Right cardiac atrium (tissue), 5 donors: ENCODE measurements at regions of chr22 and their contacts with region 1.

Region 1: DNA sequence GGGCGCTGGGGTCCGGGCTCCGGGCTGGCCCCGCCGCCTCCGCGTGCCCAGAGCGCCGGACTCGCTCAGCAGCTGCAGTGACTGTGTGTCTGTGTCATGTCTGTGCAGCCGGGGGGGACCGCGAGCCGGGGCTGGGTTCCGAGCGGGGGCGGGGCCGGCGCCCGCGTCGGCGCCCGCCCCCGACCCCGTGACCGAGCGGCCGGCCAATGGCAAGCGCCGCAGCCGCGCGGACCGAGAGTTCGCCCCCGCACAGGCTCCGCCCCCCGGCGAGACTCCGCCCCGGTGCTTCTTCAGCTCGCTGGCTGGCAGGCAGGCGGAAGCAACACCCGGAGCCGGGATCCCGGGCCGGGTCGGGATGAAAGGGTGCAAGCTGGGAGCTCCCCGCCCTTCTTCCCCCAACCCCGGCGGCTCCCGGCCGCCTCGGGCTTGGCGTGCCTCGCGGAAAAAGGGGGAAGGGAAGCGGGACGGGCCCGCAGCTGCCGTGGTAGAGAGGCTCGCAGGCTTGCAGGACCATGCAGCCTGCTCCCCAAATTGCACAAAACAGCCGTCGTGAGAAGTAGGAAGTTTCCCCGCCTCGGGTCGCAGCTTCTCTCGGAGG is 750 bp upstream of the LARGE1 start:
- DNase-seq: peak; percentile 99 to 100 (median 100)
- ATAC-seq: peak; percentile 96 to 97
- H3K4me3 ChIP-seq: peak overlapping the region; percentile 63
- H3K27ac ChIP-seq: peak overlapping the region; percentile 56
- H3K4me1 ChIP-seq: no peaks in the 10 kb centered on the region
- H3K27me3 ChIP-seq: no peaks in the 10 kb centered on the region

Region 2: DNA sequence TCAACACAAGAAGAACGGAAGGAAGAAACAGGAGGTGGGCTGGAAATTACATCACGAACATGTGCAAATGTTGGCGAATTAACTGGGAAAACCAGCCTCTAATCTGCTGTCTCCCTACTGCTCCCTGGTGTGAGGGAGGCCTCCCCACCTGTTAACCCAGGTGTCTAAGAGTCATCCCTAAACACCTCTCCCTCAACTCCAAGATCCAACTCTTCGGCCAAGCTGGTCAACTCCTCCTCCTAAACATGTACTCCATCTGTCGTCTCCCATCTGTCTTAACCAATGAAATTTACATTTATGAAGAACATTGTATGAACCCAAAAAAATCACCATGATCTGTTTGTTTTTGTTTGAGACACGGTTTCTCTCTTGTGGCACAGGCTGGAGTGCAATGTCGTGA is 154.9 kb before region 1 on chr22:
- intact Hi-C with region 1: no loop called
- DNase-seq: no peak
- ATAC-seq: no peak
- H3K4me3 ChIP-seq: no peak overlapping the region
- H3K27ac ChIP-seq: no peak overlapping the region
- H3K4me1 ChIP-seq: no peaks in the 10 kb centered on the region
- H3K27me3 ChIP-seq: no peaks in the 10 kb centered on the region

Region 3: GRCh38 chr22:33796494-33796893 is 124.5 kb before region 1 on chr22:
- intact Hi-C with region 1: loop called in 1 of 4 experiments (anchors 10 kb)
- DNase-seq: no peak
- ATAC-seq: no peak
- H3K4me3 ChIP-seq: no peak overlapping the region
- H3K27ac ChIP-seq: no peak overlapping the region
- H3K4me1 ChIP-seq: peaks cover 13% of the 10 kb centered on the region
- H3K27me3 ChIP-seq: no peaks in the 10 kb centered on the region

Region 4: GRCh38 chr22:33811686-33812085 is 109.3 kb before region 1 on chr22:
- intact Hi-C with region 1: loop called in 1 of 4 experiments (anchors 10 kb)
- DNase-seq: peak; percentile 66 to 77 (median 69)
- ATAC-seq: peak; percentile 84 to 91
- H3K4me3 ChIP-seq: no peak overlapping the region
- H3K27ac ChIP-seq: no peak overlapping the region
- H3K4me1 ChIP-seq: peaks cover 10% of the 10 kb centered on the region
- H3K27me3 ChIP-seq: no peaks in the 10 kb centered on the region

Region 5: DNA sequence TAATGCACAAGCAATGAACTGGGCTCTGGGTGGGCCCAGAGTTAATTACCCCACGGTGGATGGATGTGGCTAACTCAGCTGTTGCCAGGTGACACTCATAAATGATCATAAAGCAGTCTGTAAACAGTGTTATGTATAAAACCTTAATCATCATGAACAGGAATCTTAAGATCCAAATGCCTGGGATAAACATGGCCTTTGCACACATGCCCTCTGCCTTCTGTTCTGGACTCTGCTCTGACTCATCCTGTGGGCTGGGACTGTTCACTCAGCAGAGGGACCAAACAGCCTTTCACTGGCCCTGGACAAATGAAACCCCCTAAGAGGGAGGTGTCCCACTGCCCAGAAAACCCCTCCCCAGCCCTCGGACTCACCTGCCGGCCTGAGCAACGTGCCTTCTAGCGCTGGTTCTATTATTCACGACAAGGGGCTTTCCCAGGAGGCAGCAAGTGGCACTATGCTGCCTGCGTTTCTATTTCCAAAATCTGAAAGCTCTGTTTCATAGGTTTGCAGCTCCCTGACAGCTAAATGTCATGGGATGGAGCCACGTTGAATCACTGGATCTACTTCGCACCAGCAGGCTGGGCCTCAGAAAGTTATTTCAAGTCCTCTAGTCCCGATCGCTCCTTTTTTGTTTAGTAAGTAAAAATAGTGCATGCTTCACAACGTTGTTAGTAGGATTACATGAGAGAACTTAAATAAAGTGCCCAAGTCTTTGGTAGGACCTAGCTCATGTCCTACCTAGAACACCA is 53.7 kb before region 1 on chr22:
- intact Hi-C with region 1: no loop called
- DNase-seq: no peak
- ATAC-seq: peak; percentile 30 to 53
- H3K4me3 ChIP-seq: no peak overlapping the region
- H3K27ac ChIP-seq: peak overlapping the region; percentile 91
- H3K4me1 ChIP-seq: peaks cover 18% of the 10 kb centered on the region
- H3K27me3 ChIP-seq: no peaks in the 10 kb centered on the region

Region 6: DNA sequence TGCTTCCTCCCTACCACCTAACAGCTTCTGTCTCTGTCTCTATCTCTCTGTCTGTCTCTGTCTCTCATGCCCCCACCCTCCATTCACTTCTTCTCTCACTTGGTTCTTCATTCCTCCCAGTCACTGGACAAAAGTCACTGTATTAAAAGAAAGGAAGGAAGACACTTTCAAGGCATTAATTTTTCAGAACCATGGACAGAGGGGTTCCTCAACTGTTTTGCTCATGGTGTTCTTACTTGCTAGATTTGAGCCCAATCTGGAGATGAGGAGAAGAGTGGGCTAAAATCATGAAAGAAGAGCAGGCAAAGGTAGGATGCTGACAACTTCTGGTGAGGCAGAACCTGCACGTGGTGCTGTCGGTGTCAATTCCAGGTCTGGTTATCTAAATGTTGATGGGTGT is 115.9 kb after region 1 on chr22:
- intact Hi-C with region 1: no loop called
- DNase-seq: no peak
- ATAC-seq: no peak
- H3K4me3 ChIP-seq: no peak overlapping the region
- H3K27ac ChIP-seq: no peak overlapping the region
- H3K4me1 ChIP-seq: no peaks in the 10 kb centered on the region
- H3K27me3 ChIP-seq: no peaks in the 10 kb centered on the region

Region 7: GRCh38 chr22:34105461-34106062 is 184.5 kb after region 1 on chr22:
- intact Hi-C with region 1: loop called (anchors 5 to 10 kb)
- DNase-seq: peak; percentile 49 to 81 (median 71)
- ATAC-seq: peak; percentile 63 to 68
- H3K4me3 ChIP-seq: no peak overlapping the region
- H3K27ac ChIP-seq: no peak overlapping the region
- H3K4me1 ChIP-seq: no peaks in the 10 kb centered on the region
- H3K27me3 ChIP-seq: peaks cover 2% of the 10 kb centered on the region